Activated CD4-positive, alpha-beta T cell treated with anti-CD3 and anti-CD28 coated beads, Interleukin-2, amount 10 ng/mL, durations not matched to agents 24 days and 14 days (primary cell): ENCODE measurements at regions of chr3 and their contacts with region 1.

Region 1: DNA sequence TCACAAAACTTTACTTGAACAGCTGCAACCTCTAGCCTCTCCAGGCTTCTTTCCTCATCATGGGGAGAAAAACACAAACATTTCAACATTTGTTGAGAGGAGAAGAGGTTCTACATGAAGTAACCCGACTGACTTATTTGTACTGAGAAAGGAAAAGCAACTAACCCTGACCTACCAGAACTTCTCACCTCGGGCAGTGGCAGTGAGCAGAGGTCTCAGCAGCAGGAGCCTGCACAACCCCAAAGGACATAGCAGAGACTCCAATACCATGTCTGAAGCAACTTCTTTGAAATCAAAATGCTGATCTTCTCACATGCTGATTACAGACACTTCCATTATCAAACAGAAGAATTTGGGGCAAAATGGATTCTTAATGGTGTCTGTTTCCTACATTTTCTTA is 1085.6 kb upstream of the CFAP20DC start:
- DNase-seq: no peak
- H3K4me3 Mint-ChIP-seq: no peak overlapping the region
- H3K27ac Mint-ChIP-seq: no peak overlapping the region
- H3K4me1 Mint-ChIP-seq: peaks cover 4% of the 10 kb centered on the region
- H3K27me3 Mint-ChIP-seq: no peaks in the 10 kb centered on the region

Region 2: DNA sequence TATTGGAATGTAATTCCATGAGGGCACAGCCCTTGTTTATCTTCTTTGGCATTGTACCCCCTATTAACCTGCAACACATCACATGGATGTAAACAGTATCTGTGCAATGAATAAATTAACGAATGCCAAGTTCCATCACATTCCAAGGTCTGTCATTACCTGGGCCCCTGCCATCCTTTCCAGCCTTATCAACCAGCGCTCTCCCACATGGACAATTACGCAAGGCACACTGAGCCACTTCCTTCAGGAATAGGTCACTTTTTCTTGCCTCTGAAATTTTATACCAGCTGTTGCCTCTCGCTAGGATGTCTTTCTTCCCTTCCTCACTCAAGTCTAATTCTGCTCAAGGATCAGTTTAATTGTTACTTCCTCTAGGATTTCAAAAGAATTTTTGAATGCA is 33.9 kb before region 1 on chr3:
- intact Hi-C with region 1: loop called (anchors 5 kb)
- DNase-seq: no peak
- H3K4me3 Mint-ChIP-seq: no peak overlapping the region
- H3K27ac Mint-ChIP-seq: no peak overlapping the region
- H3K4me1 Mint-ChIP-seq: peaks cover 21% of the 10 kb centered on the region
- H3K27me3 Mint-ChIP-seq: no peaks in the 10 kb centered on the region